GM12878 (cell line): ENCODE measurements at regions of chr5 and their contacts with region 1.

Region 1: DNA sequence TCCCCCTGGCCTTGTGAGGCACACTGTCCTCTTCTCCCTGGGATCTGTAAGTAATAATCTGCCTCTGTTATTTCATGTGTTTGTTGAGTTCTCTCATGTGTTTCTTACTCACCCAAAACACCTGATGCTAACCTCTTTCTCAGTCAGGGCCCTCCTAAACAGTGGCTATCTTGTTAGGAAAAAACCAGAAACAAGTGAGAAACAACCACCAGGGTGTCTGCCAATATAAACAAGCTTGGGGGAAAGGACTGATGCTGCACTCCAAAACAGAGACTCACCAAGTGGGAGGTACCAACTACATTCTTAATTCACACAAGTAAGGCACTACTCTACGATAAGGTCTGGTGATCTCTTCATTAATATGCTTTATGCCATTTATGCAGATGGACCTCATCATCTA is 564.4 kb downstream of the SEMA5A start:
- DNase-seq: no peak
- ATAC-seq: no peak
- H3K4me3 ChIP-seq: no peak overlapping the region
- H3K27ac ChIP-seq: no peak overlapping the region
- H3K4me1 ChIP-seq: no peaks in the 10 kb centered on the region
- H3K27me3 ChIP-seq: no peaks in the 10 kb centered on the region
- CTCF ChIP-seq: no peak
- EP300 ChIP-seq: no peak
- POLR2A ChIP-seq: no peak
- RAD21 ChIP-seq: no peak

Region 2: DNA sequence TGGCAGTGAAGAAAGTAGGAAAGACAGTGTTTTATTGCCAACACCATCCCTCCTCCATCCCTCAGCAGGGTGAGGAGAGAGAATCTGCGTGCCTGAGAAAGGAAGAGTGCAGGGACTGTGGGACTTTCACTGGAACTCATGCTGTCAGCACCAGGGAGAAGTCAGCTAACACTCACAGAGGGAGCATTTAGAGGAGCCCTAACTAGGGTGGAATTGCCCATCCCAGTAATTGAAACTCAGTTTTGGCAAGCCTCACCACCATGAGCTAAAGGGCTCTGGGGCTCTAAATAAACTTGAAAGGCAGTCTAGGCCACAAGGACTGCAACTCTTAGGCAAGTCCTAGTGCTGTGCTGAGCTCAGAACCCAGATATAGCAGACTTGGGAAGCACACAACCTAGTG is 58.0 kb before region 1 on chr5:
- CTCF ChIA-PET with region 1: no interaction called
- POLR2A ChIA-PET with region 1: no interaction called
- RAD21 ChIA-PET with region 1: no interaction called
- SMC1A ChIA-PET with region 1: no interaction called
- in situ Hi-C with region 1: no loop called
- intact Hi-C with region 1: no loop called
- DNase-seq: no peak
- ATAC-seq: no peak
- H3K4me3 ChIP-seq: no peak overlapping the region
- H3K27ac ChIP-seq: no peak overlapping the region
- H3K4me1 ChIP-seq: no peaks in the 10 kb centered on the region
- H3K27me3 ChIP-seq: no peaks in the 10 kb centered on the region
- CTCF ChIP-seq: no peak
- EP300 ChIP-seq: no peak
- POLR2A ChIP-seq: no peak
- RAD21 ChIP-seq: no peak

Region 3: GRCh38 chr5:8993031-8993430 is 11.5 kb after region 1 on chr5:
- CTCF ChIA-PET with region 1: interaction called, 13 read pairs
- POLR2A ChIA-PET with region 1: interaction called, 3 read pairs
- RAD21 ChIA-PET with region 1: interaction called, 3 read pairs
- SMC1A ChIA-PET with region 1: interaction called, 6 read pairs
- in situ Hi-C with region 1: no loop called
- intact Hi-C with region 1: no loop called
- DNase-seq: no peak
- ATAC-seq: no peak; the same call in 2 of the 3 replicates
- H3K4me3 ChIP-seq: no peak overlapping the region
- H3K27ac ChIP-seq: no peak overlapping the region
- H3K4me1 ChIP-seq: no peaks in the 10 kb centered on the region
- H3K27me3 ChIP-seq: no peaks in the 10 kb centered on the region
- CTCF ChIP-seq: peak; percentile 11 to 26 (median 17); a peak in 1 of 6 replicates
- EP300 ChIP-seq: no peak
- POLR2A ChIP-seq: no peak
- RAD21 ChIP-seq: peak; percentile 32; the same call in 1 of the 2 replicates

Region 4: DNA sequence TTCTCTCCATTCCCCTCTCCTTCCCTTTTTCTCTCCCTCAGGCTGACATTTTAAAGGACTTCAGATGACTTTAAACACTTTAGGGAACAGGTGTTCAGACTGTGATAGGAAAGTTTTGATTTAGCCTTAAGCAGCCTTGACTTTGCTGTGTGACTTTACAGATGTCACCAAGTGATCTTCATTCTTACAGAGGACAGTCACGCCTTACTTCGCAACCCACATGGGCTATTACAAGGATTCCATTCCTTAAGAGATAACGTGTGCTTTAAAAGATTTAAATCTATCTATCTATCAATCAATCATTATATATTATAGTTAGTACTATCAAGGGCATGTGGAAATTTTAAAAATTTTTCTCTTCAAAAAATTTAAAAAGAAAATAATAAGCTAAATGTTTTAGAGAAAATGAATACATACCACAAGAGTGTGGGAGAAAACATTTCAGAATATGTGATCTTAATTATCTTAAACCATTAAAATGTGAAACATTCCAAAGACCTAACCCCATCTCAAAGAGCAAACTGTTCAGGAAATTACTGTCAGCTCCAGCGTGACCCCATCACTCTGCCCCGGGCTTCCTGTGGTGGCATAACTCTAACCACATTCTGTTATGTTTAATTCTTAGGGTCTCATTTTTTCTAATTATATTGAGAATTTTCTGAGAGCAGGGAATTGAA is 33.9 kb after region 1 on chr5:
- CTCF ChIA-PET with region 1: no interaction called
- POLR2A ChIA-PET with region 1: no interaction called
- RAD21 ChIA-PET with region 1: no interaction called
- SMC1A ChIA-PET with region 1: no interaction called
- in situ Hi-C with region 1: no loop called
- intact Hi-C with region 1: no loop called
- DNase-seq: no peak
- ATAC-seq: no peak
- H3K4me3 ChIP-seq: no peak overlapping the region
- H3K27ac ChIP-seq: no peak overlapping the region
- H3K4me1 ChIP-seq: no peaks in the 10 kb centered on the region
- H3K27me3 ChIP-seq: no peaks in the 10 kb centered on the region
- CTCF ChIP-seq: no peak
- EP300 ChIP-seq: no peak
- POLR2A ChIP-seq: no peak
- RAD21 ChIP-seq: no peak

Region 5: DNA sequence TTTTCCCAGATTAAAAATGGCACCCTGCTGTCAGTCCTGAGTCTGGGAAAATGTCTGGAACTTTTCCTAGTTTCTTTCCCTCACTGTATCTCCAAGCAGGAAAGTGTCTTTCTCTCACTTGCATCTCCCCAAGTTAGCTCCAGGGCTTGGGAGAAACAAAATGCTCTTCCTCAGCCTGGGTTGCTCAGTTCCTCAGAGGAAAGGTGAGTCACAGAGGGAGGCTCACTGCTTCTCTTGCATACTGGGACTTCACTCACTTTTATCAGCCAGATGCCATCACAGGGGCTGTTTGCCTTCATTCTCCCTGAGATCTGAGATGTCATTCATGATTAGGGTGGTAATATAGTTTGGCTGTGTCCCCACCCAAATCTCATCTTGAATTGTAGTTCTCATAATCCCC is 44.4 kb after region 1 on chr5:
- CTCF ChIA-PET with region 1: no interaction called
- POLR2A ChIA-PET with region 1: no interaction called
- RAD21 ChIA-PET with region 1: no interaction called
- SMC1A ChIA-PET with region 1: no interaction called
- in situ Hi-C with region 1: no loop called
- intact Hi-C with region 1: no loop called
- DNase-seq: no peak
- ATAC-seq: no peak
- H3K4me3 ChIP-seq: no peak overlapping the region
- H3K27ac ChIP-seq: no peak overlapping the region
- H3K4me1 ChIP-seq: no peaks in the 10 kb centered on the region
- H3K27me3 ChIP-seq: no peaks in the 10 kb centered on the region
- CTCF ChIP-seq: no peak
- EP300 ChIP-seq: no peak
- POLR2A ChIP-seq: no peak
- RAD21 ChIP-seq: no peak